ENCODE measurements at regions of chr9 and their contacts with region 1.

Region 1: DNA sequence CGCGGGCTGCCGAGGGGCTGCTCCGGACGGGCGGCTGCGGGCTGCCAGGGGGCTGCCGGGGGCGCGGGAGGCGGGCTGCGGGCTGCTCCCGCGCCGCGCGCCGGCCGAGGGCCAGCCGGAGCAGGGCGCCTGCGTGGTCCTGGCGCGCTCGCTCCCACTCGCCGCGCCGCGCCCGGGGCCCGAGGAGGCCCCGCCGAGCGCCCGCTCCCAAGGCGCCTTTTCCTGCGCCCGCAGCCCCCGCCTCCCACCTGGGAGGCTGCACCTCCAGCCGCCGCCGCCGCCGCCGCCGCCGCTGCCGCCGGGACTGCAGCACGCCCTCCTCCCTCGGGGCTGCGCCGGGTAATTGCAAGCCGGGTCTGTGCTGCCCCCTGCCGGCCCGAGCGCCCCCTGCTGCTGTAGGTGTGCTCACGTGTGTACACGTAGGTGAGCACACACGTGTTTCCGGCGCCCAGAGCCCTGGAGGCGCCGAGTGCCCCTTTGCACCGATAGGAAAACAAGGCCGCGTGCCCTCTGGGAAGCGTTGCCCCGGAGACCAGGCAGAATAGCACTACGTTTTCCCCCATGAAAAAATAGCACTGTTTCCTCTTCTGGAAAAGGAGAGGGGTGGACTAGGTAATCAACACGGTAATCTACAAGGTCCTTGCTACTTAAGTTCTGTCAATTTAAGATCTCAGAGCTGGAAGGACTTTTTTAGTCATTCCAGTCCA is at the start of gene EPB41L4B:
- DNase-seq: peak; percentile 85
- H3K4me3 Mint-ChIP-seq: peak within 1 kb of the TSS; percentile 84
- H3K27ac Mint-ChIP-seq: peak within 1 kb of the TSS; percentile 72
- H3K4me1 Mint-ChIP-seq: peaks cover 23% of the 10 kb centered on the region
- H3K27me3 Mint-ChIP-seq: peaks cover 69% of the 10 kb centered on the region
- total RNA-seq, gene EPB41L4B: 2.0 and 2.2 TPM in 2 replicates

Region 2: GRCh38 chr9:107489687-107490605 is 1830.9 kb before region 1 on chr9 and contains the start of gene KLF4:
- intact Hi-C with region 1: loop called (anchors 2 kb)
- DNase-seq: peak; percentile 54
- H3K4me3 Mint-ChIP-seq: peak within 1 kb of the TSS; percentile 70
- H3K27ac Mint-ChIP-seq: peak within 1 kb of the TSS; percentile 58
- H3K4me1 Mint-ChIP-seq: peaks cover 5% of the 10 kb centered on the region
- H3K27me3 Mint-ChIP-seq: peaks cover 67% of the 10 kb centered on the region
- total RNA-seq, gene KLF4: 2.3 and 3.3 TPM in 2 replicates

Region 3: DNA sequence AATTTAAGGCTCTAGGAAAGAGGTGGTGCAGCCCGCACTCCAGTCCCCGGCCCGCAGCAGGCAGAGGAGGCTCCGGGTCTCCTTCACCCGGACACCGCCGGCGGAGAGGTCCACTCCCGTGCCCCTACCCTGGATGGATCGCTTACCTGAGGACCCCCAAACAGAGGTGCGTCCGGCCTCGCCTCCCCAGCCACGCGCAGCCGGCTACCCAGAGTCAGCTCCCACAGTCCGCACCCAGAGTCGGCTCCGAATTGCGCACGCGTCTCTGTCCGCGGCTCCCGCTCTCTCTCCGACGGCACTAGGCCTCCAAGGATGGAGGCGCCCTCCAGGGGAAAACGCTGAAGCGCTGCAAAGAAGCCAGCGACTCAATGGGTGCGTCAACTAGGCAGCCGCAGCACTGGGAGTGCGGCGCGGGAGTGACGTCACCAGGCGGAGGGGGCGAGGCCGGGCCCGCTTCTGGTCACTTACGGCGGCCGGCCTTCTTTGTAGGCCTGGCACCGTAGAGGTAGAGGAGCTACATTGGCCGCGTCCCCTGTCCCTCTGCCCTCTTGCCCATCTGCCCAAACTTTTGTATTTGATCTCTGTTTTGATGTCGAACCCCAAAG is 387.1 kb before region 1 on chr9 and contains the start of gene ELP1:
- intact Hi-C with region 1: loop called (anchors 2 kb)
- DNase-seq: peak; percentile 90
- H3K4me3 Mint-ChIP-seq: peak within 1 kb of the TSS; percentile 95
- H3K27ac Mint-ChIP-seq: peak within 1 kb of the TSS; percentile 95
- H3K4me1 Mint-ChIP-seq: peaks cover 23% of the 10 kb centered on the region
- H3K27me3 Mint-ChIP-seq: no peaks in the 10 kb centered on the region
- total RNA-seq, gene ELP1: 31.6 and 35.2 TPM in 2 replicates

Region 4: GRCh38 chr9:109244157-109245132 is 76.5 kb before region 1 on chr9:
- intact Hi-C with region 1: loop called (anchors 1 kb)
- DNase-seq: peak; percentile 42
- H3K4me3 Mint-ChIP-seq: no peak overlapping the region
- H3K27ac Mint-ChIP-seq: no peak overlapping the region
- H3K4me1 Mint-ChIP-seq: no peaks in the 10 kb centered on the region
- H3K27me3 Mint-ChIP-seq: peaks cover 29% of the 10 kb centered on the region

Region 5: DNA sequence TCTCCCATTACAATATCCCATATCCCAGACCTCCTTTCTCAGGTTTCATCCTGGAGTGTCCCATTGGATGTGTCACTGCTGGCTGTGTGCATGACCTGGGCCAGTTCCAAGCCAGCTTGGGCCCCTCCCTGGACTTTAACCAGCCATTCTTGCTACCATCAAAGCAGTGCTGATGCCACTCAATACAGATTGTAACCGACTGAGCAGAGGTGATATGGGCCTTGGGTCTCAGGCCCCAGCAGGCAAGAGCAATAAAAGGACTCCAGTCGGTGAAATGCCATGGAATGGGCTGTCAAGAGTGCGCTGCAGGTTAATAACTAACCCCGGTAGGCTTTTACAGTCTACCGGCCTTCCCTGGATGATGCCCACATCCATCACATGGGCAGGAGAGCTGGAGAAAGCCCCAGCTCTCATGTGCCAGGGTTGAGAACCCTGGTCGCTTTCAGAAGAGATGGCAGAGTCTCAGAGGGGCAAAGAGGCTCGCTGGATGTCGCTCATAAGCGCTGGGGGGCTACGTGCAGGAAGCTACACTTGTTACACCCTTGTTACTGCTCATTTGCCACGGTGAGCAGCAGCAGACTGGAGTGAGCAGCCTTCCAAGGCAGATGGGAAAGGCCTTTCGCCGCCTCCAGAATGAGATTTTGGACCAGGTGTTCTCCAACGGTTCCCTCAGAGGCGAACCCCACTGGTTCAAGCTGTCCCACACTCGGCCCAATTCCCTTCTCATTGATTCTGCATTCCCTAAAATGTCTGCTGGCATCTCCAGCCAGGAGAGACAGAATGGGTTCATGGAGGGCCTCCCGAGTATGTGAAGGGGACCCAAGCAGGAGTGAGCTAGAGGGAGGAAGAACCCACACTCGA is 13.3 kb before region 1 on chr9:
- intact Hi-C with region 1: no loop called
- DNase-seq: no peak
- H3K4me3 Mint-ChIP-seq: no peak overlapping the region
- H3K27ac Mint-ChIP-seq: no peak overlapping the region
- H3K4me1 Mint-ChIP-seq: peaks cover 8% of the 10 kb centered on the region
- H3K27me3 Mint-ChIP-seq: peaks cover 24% of the 10 kb centered on the region

Region 6: DNA sequence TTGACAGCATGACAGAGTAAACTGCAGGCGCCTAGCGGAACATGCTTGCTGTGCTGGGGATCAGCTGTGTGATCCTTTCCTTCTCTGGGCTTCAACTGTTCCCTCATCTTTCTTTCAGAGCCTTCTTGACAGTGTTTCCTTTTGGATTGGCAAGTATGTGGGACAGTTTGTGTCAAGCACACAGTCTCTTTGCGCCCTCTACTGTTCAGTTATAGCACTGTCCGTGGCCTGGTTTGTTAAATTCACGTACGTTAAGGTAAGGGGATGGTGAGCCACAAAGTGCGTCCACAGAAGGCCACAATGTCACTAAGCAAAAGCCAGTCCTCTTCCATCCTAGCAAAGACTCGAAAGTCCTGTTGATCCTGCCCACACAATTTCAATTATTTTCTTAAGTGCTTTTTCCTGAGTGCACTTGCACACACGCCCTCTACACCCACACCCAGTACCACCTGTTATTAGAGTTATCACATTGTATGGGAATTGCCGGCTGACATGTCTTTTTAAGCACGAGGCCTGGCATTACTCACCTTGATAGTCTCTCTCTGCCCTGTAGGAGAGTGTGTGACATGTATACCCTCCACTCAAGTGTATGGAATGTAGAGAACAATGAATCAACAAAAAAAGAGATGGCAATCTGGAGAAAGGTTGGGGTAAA is 199.7 kb after region 1 on chr9:
- intact Hi-C with region 1: loop called (anchors 2 kb)
- DNase-seq: peak; percentile 24
- H3K4me3 Mint-ChIP-seq: no peak overlapping the region
- H3K27ac Mint-ChIP-seq: no peak overlapping the region
- H3K4me1 Mint-ChIP-seq: peaks cover 5% of the 10 kb centered on the region
- H3K27me3 Mint-ChIP-seq: peaks cover 17% of the 10 kb centered on the region

Region 7: DNA sequence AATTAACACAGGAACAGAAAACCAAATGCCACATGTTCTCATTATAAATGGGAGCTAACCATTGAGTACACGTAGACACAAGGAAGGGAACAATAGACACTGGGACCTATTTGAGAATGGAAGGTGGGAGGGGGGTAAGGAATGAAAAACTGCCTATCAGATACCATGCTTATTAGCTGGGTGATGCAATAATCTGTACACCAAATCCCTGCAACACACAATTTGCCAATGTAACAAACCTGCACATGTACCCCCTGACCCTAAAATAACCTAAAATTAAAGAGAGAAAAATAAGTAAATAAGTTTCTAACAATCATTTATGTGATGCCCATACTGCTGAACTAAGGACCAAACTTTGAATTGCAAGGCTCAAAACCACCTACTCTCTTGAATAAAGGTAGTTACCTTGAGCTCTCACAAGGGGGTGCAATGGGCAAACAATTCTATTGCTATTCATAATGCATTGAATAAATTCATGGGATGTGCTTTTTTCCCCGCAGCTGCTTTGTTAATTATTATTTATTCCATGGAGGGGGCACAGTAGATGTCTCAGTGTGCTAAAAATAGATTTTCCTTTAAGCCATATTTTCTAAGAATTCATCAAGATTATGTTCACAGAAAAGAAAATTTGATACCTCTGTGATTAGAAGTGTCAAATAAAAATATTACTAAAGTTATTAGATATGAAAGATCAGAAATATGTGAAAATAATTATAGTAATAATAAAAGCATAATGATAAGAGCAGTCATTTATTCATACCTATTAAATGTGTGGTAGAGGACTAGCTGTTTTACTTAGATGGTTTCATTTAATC is 253.4 kb after region 1 on chr9:
- intact Hi-C with region 1: no loop called
- DNase-seq: peak; percentile 14
- H3K4me3 Mint-ChIP-seq: no peak overlapping the region
- H3K27ac Mint-ChIP-seq: no peak overlapping the region
- H3K4me1 Mint-ChIP-seq: no peaks in the 10 kb centered on the region
- H3K27me3 Mint-ChIP-seq: peaks cover 19% of the 10 kb centered on the region

Measured in activated T-helper 1 cell treated with anti-CD3 and anti-CD28 coated beads, Interleukin-12 subunit alpha, Interleukin-12 subunit beta, Interleukin-2, Interleukin-4 antibody, amounts not matched to agents 30 ng/mL and 10 ng/mL and 1 ng/mL, durations not matched to agents 14 hours and 24 hours and 36 hours (primary cell).